ENCODE measurements at regions of chr16 and their contacts with region 1.

Region 1: DNA sequence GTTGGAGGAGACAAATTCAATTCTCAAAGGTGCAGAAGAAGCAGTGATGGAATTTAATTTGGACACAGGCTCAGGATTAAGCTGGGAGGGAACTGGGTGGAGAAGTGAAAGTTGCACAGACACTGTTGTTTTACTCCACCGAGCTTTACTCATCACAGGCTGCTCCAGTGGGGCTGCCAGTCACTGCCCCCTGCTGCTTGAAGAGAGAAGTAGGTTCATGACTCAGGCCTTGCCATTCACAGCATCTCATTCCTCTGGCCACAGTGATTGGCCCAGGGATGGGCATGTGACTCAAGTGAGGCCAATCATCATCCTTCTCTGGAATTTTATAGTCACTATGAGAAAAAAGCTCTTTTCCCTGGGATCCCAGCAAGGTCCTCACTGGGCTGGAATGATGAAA is 11.8 kb downstream of the GNAO1 start:
- DNase-seq: peak; percentile 55 to 70 (median 66)
- H3K4me3 ChIP-seq: no peak overlapping the region
- H3K4me3 Mint-ChIP-seq: no peak overlapping the region
- H3K27ac ChIP-seq: no peak overlapping the region
- H3K27ac Mint-ChIP-seq: no peak overlapping the region
- H3K4me1 ChIP-seq: peaks cover 57% of the 10 kb centered on the region
- H3K4me1 Mint-ChIP-seq: peaks cover 0 to 24% (median 9%) of the 10 kb centered on the region in 4 donors
- H3K27me3 ChIP-seq: no peaks in the 10 kb centered on the region
- H3K27me3 Mint-ChIP-seq: no peaks in the 10 kb centered on the region

Region 2: GRCh38 chr16:55465077-55465896 is 737.8 kb before region 1 on chr16:
- CTCF ChIA-PET with region 1: no interaction called
- POLR2A ChIA-PET with region 1: no interaction called
- intact Hi-C with region 1: loop called (anchors 5 kb)
- DNase-seq: peak; percentile 70 to 79 (median 74)
- H3K4me3 ChIP-seq: no peak overlapping the region
- H3K4me3 Mint-ChIP-seq: peak overlapping the region in 1 of 8 donors; percentile 22
- H3K27ac ChIP-seq: no peak overlapping the region
- H3K27ac Mint-ChIP-seq: no peak overlapping the region
- H3K4me1 ChIP-seq: no peaks in the 10 kb centered on the region
- H3K4me1 Mint-ChIP-seq: peaks cover 0 to 5% (median 1%) of the 10 kb centered on the region in 4 donors
- H3K27me3 ChIP-seq: no peaks in the 10 kb centered on the region
- H3K27me3 Mint-ChIP-seq: peaks cover 0 to 3% of the 10 kb centered on the region in 2 donors

Region 3: DNA sequence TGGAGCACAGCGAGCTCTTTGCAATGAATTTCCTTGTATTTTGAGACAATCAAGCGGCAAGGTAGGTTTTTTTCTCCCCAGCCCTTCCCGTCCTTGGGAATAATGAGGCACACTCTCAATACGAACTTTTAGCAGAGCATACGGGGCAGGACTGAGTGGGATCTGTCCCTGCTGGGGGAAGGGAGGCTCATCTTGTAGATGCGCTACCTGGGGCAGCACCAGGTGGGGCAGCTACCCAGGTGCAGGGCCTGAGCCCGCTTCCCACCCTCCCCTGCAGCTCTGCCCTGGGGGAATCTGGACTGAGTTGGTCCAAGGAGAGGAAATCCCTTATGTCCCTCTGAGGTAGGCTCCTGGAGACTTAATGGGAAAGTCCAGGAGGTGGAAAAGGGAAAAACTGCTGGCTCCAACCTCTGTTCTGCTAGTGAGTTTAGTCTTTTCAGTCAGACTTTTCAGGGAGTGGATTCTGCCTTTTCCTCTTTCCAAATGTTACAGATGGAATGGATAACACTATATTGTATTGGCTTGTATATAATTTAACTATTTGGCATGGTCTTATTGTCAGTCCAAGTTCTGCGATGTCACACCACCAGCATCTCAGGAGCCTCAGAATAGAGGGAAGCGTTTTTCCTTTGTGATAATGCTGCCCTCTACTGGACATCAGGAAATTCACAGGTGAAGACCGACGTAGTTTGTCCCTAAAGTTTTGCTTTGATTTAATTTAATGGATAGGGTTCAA is 360.5 kb before region 1 on chr16:
- CTCF ChIA-PET with region 1: interaction called, 3 read pairs
- POLR2A ChIA-PET with region 1: no interaction called
- intact Hi-C with region 1: loop called (anchors 2 kb)
- DNase-seq: peak in 4 of 5 donors; percentile 24 to 41 (median 34)
- H3K4me3 ChIP-seq: no peak overlapping the region
- H3K4me3 Mint-ChIP-seq: no peak overlapping the region
- H3K27ac ChIP-seq: no peak overlapping the region
- H3K27ac Mint-ChIP-seq: no peak overlapping the region
- H3K4me1 ChIP-seq: no peaks in the 10 kb centered on the region
- H3K4me1 Mint-ChIP-seq: peaks cover 0 to 4% (median 3%) of the 10 kb centered on the region in 4 donors
- H3K27me3 ChIP-seq: peaks cover 3% of the 10 kb centered on the region
- H3K27me3 Mint-ChIP-seq: peaks cover 11 to 13% of the 10 kb centered on the region in 2 donors

Region 4: DNA sequence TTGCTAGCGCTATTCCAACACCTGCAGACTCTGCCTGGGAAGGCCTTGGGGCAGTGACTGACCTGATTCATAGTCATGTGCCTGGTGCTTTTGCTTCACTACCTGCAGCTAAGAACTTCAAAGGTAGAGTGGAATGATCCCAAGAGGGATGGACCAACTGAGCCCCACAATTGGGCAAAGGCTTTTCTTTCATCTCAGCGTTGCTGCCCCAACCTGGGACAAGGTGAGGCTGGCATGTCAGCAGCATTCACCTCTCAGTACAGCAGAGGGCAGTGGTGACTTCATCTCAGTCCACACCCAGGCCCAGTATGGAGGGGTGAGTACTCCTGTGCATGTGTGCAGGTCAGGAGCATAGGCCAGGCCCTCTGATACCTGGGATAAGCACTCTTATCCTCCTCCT is 161.4 kb before region 1 on chr16:
- CTCF ChIA-PET with region 1: interaction called, 44 read pairs
- POLR2A ChIA-PET with region 1: interaction called, 3 read pairs
- intact Hi-C with region 1: loop called (anchors 1 kb)
- DNase-seq: peak in 4 of 5 donors; percentile 25 to 47 (median 36)
- H3K4me3 ChIP-seq: no peak overlapping the region
- H3K4me3 Mint-ChIP-seq: no peak overlapping the region
- H3K27ac ChIP-seq: no peak overlapping the region
- H3K27ac Mint-ChIP-seq: no peak overlapping the region
- H3K4me1 ChIP-seq: no peaks in the 10 kb centered on the region
- H3K4me1 Mint-ChIP-seq: no peaks in the 10 kb centered on the region
- H3K27me3 ChIP-seq: no peaks in the 10 kb centered on the region
- H3K27me3 Mint-ChIP-seq: peaks cover 0 to 4% of the 10 kb centered on the region in 2 donors

Region 5: GRCh38 chr16:56226187-56226586 is 23.1 kb after region 1 on chr16:
- CTCF ChIA-PET with region 1: interaction called, 23 read pairs
- POLR2A ChIA-PET with region 1: interaction called, 8 read pairs
- intact Hi-C with region 1: no loop called
- DNase-seq: no peak
- H3K4me3 ChIP-seq: no peak overlapping the region
- H3K4me3 Mint-ChIP-seq: peak overlapping the region in 7 of 8 donors; percentile 73 to 90 (median 84)
- H3K27ac ChIP-seq: no peak overlapping the region
- H3K27ac Mint-ChIP-seq: peak overlapping the region; percentile 73 to 94 (median 83)
- H3K4me1 ChIP-seq: peaks cover 38% of the 10 kb centered on the region
- H3K4me1 Mint-ChIP-seq: peaks cover 35 to 49% (median 41%) of the 10 kb centered on the region in 4 donors
- H3K27me3 ChIP-seq: no peaks in the 10 kb centered on the region
- H3K27me3 Mint-ChIP-seq: no peaks in the 10 kb centered on the region

Region 6: DNA sequence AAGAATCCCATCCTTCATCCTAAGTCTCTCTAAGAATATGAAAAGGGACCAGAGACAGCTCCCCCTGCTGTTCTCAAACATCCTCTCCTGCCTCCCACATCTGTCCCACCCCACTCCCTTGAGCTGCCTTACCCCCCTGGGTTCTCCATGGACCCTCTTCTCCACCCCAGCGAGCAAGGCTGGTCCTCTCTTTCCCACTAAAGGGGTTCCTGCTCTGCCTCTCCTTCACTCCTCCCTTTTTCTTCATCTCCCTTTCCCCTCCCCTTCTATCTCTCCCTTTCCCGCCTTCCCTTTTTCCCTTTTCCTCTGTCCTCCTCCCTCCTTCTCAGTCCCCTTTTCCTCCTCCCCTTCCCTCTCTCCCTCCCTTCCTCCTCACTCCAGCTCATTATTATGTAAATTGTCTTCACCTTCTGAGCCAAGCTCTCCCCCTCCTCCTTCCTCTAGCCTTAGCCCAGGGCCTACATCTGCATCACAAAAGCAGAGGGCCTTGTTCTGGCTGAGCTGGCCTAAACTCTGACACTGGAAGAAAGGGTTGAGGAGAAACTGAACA is 78.3 kb after region 1 on chr16:
- CTCF ChIA-PET with region 1: interaction called, 21 read pairs
- POLR2A ChIA-PET with region 1: interaction called, 15 read pairs
- intact Hi-C with region 1: loop called (anchors 5 kb)
- DNase-seq: no peak
- H3K4me3 ChIP-seq: no peak overlapping the region
- H3K4me3 Mint-ChIP-seq: no peak overlapping the region
- H3K27ac ChIP-seq: no peak overlapping the region
- H3K27ac Mint-ChIP-seq: peak overlapping the region in 4 of 7 donors; percentile 35 to 74 (median 58)
- H3K4me1 ChIP-seq: peaks cover 38% of the 10 kb centered on the region
- H3K4me1 Mint-ChIP-seq: peaks cover 26 to 44% (median 36%) of the 10 kb centered on the region in 4 donors
- H3K27me3 ChIP-seq: no peaks in the 10 kb centered on the region
- H3K27me3 Mint-ChIP-seq: no peaks in the 10 kb centered on the region